PC-9 (cell line): ENCODE measurements at regions of chr10 and their contacts with region 1.

Region 1: DNA sequence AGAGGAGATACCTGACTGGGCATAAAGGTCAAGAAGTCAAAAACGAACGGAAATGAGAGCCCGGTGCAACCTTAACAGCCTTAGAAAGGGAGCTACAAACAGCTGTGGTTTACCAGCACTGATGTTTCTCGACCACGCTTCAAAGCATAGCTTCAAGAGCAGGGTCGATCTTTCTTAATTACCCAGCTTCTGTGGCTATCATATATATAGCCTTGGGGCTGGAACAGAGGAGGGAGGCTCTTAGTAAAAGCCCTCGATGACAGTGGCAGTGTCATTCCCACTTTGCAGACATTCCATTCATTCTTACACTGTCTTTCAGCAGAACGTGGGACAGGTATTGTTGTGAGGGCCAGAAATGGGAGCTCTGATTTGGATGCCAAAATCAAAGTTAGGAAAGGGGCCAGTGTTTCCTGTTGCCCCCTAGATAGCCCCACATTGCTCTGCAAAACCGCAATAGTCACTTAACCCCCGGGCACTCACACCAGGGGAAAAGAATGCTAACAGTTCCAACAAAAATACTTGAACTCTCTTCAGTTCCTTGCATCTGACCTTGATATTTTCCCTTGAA is 141.5 kb downstream of the MTPAP start:
- DNase-seq: peak; percentile 67 to 83
- H3K4me3 ChIP-seq: no peak overlapping the region
- H3K27ac ChIP-seq: peak overlapping the region; percentile 18; the same call in 1 of the 2 replicates
- H3K4me1 ChIP-seq: peaks cover 18% of the 10 kb centered on the region
- H3K27me3 ChIP-seq: no peaks in the 10 kb centered on the region
- CTCF ChIP-seq: no peak

Region 2: DNA sequence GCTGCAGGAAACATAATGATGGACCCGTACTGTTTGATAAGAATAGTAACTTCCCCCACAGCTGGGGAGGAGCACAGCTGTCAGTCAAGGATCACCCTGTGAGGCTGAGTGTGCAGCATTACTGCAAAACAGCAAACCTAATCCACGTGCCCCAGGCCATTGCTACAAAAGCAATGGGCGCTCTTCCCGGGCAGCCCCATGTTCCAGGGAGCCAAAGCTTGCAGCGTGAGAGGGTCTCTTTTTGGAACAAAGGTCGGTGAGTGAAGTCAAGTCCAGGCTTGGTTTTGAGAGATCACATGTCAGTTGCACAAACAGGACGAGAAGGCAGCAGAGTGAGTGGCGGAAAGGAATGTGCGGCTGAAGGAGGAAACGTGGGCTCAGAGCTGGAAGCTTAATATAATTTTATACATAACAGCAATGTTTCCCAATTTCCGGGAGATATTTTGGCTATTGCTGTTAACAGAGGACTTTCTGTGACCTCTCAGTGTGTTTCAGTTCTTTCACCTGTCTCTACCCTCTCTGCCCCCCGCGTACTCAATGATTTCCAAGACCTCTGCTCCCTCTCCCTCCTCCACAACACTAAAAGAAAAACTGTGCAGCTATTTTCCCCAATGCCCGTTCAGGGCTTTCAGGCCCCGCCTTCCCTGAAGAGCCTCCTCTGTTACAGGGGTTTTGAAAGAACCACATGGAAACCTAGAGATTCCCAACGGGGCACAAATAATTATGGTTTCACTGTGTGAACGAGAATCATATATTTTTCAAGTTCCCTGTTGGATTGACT is 12.6 kb after region 1 on chr10:
- CTCF ChIA-PET with region 1: no interaction called
- POLR2A ChIA-PET with region 1: interaction called, 10 read pairs
- intact Hi-C with region 1: no loop called
- DNase-seq: peak; percentile 46 to 82
- H3K4me3 ChIP-seq: peak overlapping the region; percentile 48; the same call in 1 of the 2 replicates
- H3K27ac ChIP-seq: peak overlapping the region; percentile 68
- H3K4me1 ChIP-seq: peaks cover 23% of the 10 kb centered on the region
- H3K27me3 ChIP-seq: no peaks in the 10 kb centered on the region
- CTCF ChIP-seq: no peak

Region 3: GRCh38 chr10:30330497-30331168 is 123.1 kb after region 1 on chr10:
- CTCF ChIA-PET with region 1: no interaction called
- POLR2A ChIA-PET with region 1: interaction called, 10 read pairs
- intact Hi-C with region 1: no loop called
- DNase-seq: no peak
- H3K4me3 ChIP-seq: no peak overlapping the region
- H3K27ac ChIP-seq: no peak overlapping the region
- H3K4me1 ChIP-seq: no peaks in the 10 kb centered on the region
- H3K27me3 ChIP-seq: no peaks in the 10 kb centered on the region
- CTCF ChIP-seq: no peak

Region 4: GRCh38 chr10:30675791-30676718 is 468.5 kb after region 1 on chr10:
- CTCF ChIA-PET with region 1: no interaction called
- POLR2A ChIA-PET with region 1: no interaction called
- intact Hi-C with region 1: no loop called
- DNase-seq: no peak
- H3K4me3 ChIP-seq: no peak overlapping the region
- H3K27ac ChIP-seq: no peak overlapping the region
- H3K4me1 ChIP-seq: no peaks in the 10 kb centered on the region
- H3K27me3 ChIP-seq: no peaks in the 10 kb centered on the region
- CTCF ChIP-seq: no peak